CD8-positive, alpha-beta memory T cell (primary cell): ENCODE measurements at regions of chr12 and their contacts with region 1.

Region 1: DNA sequence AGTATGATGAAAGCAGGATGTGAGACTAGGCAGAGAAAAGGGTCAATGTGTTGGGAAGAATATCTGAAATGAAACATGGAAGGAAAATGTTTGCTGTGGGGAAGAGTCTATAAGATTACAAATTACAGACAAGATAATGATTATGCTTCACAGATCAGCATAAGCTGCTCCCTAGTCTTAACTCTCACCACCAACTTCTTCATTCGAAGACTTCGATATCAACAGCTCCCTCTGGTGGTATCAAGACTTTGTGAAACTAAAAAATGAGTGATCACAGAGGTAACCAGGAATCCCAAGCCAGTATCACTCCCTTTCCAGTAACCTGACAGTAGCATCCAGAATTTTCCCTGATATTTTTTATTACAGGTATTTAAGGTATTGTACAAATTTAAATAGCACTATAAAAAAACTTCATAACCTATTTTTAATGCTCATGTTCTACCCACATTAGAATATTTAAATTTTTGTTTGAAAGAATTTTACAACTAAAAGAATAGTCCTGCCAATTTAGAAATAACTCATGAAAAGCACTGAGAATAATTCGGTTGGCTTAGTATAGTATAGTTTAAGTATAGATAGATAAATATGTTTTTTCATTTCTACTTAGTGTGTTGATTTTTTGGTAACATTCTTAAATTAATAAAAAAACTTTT is 84.4 kb downstream of the C2CD5 start:
- DNase-seq: peak in 2 of 5 donors; percentile 21 to 23
- H3K4me3 ChIP-seq: no peak overlapping the region
- H3K4me3 Mint-ChIP-seq: no peak overlapping the region
- H3K27ac ChIP-seq: no peak overlapping the region
- H3K27ac Mint-ChIP-seq: peak overlapping the region in 1 of 8 donors; percentile 46
- H3K4me1 ChIP-seq: no peaks in the 10 kb centered on the region
- H3K4me1 Mint-ChIP-seq: peaks cover 0 to 5% (median 4%) of the 10 kb centered on the region in 3 donors
- H3K27me3 ChIP-seq: no peaks in the 10 kb centered on the region
- H3K27me3 Mint-ChIP-seq: no peaks in the 10 kb centered on the region

Region 2: DNA sequence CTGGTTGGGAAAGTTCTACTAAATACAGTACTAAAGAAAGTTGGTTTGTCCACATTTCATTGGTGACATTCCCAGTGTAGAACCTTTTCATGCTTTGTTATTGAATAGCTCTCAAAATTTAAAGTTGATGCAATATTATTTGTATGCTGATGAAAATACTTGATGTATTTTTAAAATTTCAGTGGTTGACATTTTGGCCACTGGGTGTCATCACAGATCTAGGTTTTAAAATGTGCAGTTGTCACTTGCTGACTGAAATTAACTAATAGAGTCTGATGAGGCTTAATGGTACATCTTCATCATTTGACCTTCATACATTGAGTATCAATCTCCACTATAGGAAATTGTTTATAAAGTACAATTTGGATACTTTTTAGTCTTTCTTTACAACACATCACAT is 376.8 kb before region 1 on chr12:
- CTCF ChIA-PET with region 1: interaction called, 12 read pairs
- POLR2A ChIA-PET with region 1: no interaction called
- DNase-seq: peak in 3 of 5 donors; percentile 5 to 30 (median 30)
- H3K4me3 ChIP-seq: no peak overlapping the region
- H3K4me3 Mint-ChIP-seq: no peak overlapping the region
- H3K27ac ChIP-seq: no peak overlapping the region
- H3K27ac Mint-ChIP-seq: no peak overlapping the region
- H3K4me1 ChIP-seq: no peaks in the 10 kb centered on the region
- H3K4me1 Mint-ChIP-seq: no peaks in the 10 kb centered on the region
- H3K27me3 ChIP-seq: no peaks in the 10 kb centered on the region
- H3K27me3 Mint-ChIP-seq: peaks cover 0 to 4% of the 10 kb centered on the region in 2 donors

Region 3: GRCh38 chr12:22100958-22101748 is 358.8 kb before region 1 on chr12:
- CTCF ChIA-PET with region 1: interaction called, 24 read pairs
- POLR2A ChIA-PET with region 1: no interaction called
- DNase-seq: peak in 3 of 5 donors; percentile 16 to 61 (median 47)
- H3K4me3 ChIP-seq: no peak overlapping the region
- H3K4me3 Mint-ChIP-seq: peak overlapping the region in 1 of 7 donors; percentile 40
- H3K27ac ChIP-seq: no peak overlapping the region
- H3K27ac Mint-ChIP-seq: no peak overlapping the region
- H3K4me1 ChIP-seq: peaks cover 10% of the 10 kb centered on the region
- H3K4me1 Mint-ChIP-seq: peaks cover 6 to 11% (median 8%) of the 10 kb centered on the region in 3 donors
- H3K27me3 ChIP-seq: no peaks in the 10 kb centered on the region
- H3K27me3 Mint-ChIP-seq: no peaks in the 10 kb centered on the region

Region 4: GRCh38 chr12:22366181-22366580 is 93.8 kb before region 1 on chr12:
- CTCF ChIA-PET with region 1: no interaction called
- POLR2A ChIA-PET with region 1: no interaction called
- DNase-seq: no peak
- H3K4me3 ChIP-seq: no peak overlapping the region
- H3K4me3 Mint-ChIP-seq: no peak overlapping the region
- H3K27ac ChIP-seq: no peak overlapping the region
- H3K27ac Mint-ChIP-seq: no peak overlapping the region
- H3K4me1 ChIP-seq: no peaks in the 10 kb centered on the region
- H3K4me1 Mint-ChIP-seq: no peaks in the 10 kb centered on the region
- H3K27me3 ChIP-seq: no peaks in the 10 kb centered on the region
- H3K27me3 Mint-ChIP-seq: no peaks in the 10 kb centered on the region

Region 5: GRCh38 chr12:22473212-22473611 is 13.2 kb after region 1 on chr12:
- CTCF ChIA-PET with region 1: interaction called, 13 read pairs
- POLR2A ChIA-PET with region 1: no interaction called
- DNase-seq: no peak
- H3K4me3 ChIP-seq: no peak overlapping the region
- H3K4me3 Mint-ChIP-seq: peak overlapping the region in 6 of 7 donors; percentile 18 to 64 (median 50)
- H3K27ac ChIP-seq: no peak overlapping the region
- H3K27ac Mint-ChIP-seq: peak overlapping the region in 4 of 8 donors; percentile 50 to 78 (median 72)
- H3K4me1 ChIP-seq: no peaks in the 10 kb centered on the region
- H3K4me1 Mint-ChIP-seq: peaks cover 22 to 23% (median 23%) of the 10 kb centered on the region in 3 donors
- H3K27me3 ChIP-seq: no peaks in the 10 kb centered on the region
- H3K27me3 Mint-ChIP-seq: no peaks in the 10 kb centered on the region

Region 6: GRCh38 chr12:22598141-22598762 is 138.3 kb after region 1 on chr12:
- CTCF ChIA-PET with region 1: no interaction called
- POLR2A ChIA-PET with region 1: no interaction called
- DNase-seq: no peak
- H3K4me3 ChIP-seq: no peak overlapping the region
- H3K4me3 Mint-ChIP-seq: no peak overlapping the region
- H3K27ac ChIP-seq: no peak overlapping the region
- H3K27ac Mint-ChIP-seq: no peak overlapping the region
- H3K4me1 ChIP-seq: no peaks in the 10 kb centered on the region
- H3K4me1 Mint-ChIP-seq: peaks cover 0 to 6% (median 6%) of the 10 kb centered on the region in 3 donors
- H3K27me3 ChIP-seq: no peaks in the 10 kb centered on the region
- H3K27me3 Mint-ChIP-seq: peaks cover 1 to 10% of the 10 kb centered on the region in 2 donors